ENCODE measurements at regions of chr6 and their contacts with region 1.

Region 1: GRCh38 chr6:138944412-138944811 is 43.6 kb downstream of the REPS1 start:
- DNase-seq: no peak
- ATAC-seq: no peak
- H3K4me3 Mint-ChIP-seq: no peak overlapping the region
- H3K27ac Mint-ChIP-seq: no peak overlapping the region
- H3K4me1 Mint-ChIP-seq: peaks cover 10% of the 10 kb centered on the region
- H3K27me3 Mint-ChIP-seq: no peaks in the 10 kb centered on the region
- CTCF ChIP-seq: no peak

Region 2: DNA sequence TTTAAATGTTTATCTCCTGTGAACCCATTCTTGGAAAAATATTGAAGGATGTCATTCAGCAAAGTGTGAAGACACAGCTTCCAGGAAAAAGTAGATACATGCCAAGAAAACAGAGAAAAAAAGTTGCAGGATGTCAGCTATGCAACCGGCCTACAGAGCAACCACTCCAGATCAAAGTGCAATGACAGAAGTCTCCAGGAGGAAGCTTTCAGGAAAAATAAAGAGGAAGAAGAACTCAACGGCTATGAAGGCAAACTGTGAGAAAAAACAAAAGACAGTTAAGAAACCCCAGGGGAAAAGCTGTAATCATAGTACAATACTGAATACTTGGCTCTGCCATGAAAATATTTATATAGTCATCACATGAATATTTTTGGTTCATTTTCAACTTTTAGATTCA is 13.1 kb after region 1 on chr6:
- CTCF ChIA-PET with region 1: no interaction called
- POLR2A ChIA-PET with region 1: no interaction called
- intact Hi-C with region 1: loop called (anchors 2 kb)
- DNase-seq: no peak
- ATAC-seq: no peak
- H3K4me3 Mint-ChIP-seq: no peak overlapping the region
- H3K27ac Mint-ChIP-seq: no peak overlapping the region
- H3K4me1 Mint-ChIP-seq: peaks cover 56% of the 10 kb centered on the region
- H3K27me3 Mint-ChIP-seq: no peaks in the 10 kb centered on the region
- CTCF ChIP-seq: no peak

Measured in activated B cell treated with CpG ODN at 0.5 μM for 24 hours (primary cell).